AG04449 (cell line): ENCODE measurements at regions of chr17 and their contacts with region 1.

Region 1: DNA sequence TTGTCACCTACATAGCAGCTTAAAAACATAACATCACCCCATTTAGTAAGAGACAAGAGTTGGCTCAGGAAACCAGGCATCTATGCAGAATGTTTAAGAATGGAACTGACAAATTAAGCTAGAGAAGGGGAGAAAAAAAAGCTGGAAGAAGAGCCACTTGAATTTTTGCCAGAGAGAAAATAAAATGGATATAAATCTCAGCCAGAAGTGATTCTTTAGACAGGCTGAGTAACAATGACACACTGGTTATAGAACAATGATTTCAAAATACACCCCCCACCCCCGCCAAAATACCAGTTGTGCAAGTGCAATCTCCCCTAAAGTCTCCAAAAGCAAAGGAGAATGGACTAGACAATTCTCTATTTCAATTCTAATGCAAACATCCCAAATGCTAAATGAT is 22.4 kb downstream of the LSM12 start:
- DNase-seq: no peak
- H3K4me3 ChIP-seq: no peak overlapping the region
- CTCF ChIP-seq: no peak

Region 2: DNA sequence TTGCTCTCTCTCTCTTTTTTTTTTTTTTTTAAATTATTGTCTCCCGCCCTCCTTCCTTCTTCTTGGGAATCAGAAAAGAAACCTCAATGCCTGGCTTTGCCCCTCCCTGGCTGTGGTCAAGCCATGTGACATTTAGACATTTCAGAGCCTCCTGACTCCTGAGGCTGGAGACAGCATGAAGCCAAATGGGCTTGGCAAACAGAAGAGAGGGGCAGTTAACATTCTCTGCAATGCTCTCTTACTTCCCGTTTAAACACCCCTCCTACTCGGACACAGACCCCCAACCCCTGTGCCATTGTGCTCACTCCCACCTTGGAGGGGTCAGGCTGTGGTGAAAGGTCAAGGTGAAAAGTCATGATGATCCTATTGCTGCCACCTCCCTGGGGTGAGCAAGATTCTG is 367.6 kb before region 1 on chr17:
- CTCF ChIA-PET with region 1: no interaction called
- POLR2A ChIA-PET with region 1: no interaction called
- DNase-seq: no peak
- H3K4me3 ChIP-seq: no peak overlapping the region
- CTCF ChIP-seq: no peak

Region 3: DNA sequence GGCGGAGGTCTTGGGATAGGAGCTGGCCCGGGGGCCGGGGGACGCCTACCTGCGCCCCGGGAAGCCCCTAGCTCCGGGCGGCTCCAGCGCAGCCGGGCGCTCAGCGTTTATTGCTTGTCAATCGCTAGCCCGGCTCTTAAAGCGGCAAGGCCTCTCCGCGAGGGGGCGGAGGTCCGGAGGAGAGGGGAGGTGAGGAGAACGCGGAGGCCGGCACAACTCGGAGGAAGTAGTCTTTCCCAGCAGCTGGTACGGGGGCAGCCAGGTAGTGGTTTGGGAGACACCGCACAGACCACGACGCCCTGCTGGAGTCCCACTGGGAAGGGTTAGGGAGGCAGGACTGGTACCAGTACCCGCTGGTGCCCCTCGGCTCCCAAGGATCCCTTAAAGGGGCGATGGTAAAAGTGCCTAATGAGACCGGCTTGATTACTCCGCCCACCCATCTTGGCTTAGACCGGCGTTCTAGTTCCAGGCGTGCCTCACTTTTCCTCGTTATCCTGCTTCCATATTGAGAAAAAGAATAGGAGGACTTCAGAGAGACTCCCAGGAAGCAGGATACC is 136.6 kb before region 1 on chr17 and contains the start of gene MPP2:
- CTCF ChIA-PET with region 1: interaction called, 26 read pairs
- POLR2A ChIA-PET with region 1: no interaction called
- DNase-seq: no peak
- H3K4me3 ChIP-seq: peak within 1 kb of the TSS; percentile 74
- CTCF ChIP-seq: peak; percentile 32

Region 4: GRCh38 chr17:44006598-44007345 is 37.3 kb before region 1 on chr17:
- CTCF ChIA-PET with region 1: interaction called, 14 read pairs
- POLR2A ChIA-PET with region 1: no interaction called
- DNase-seq: peak; percentile 71
- H3K4me3 ChIP-seq: peak overlapping the region; percentile 84
- CTCF ChIP-seq: peak; percentile 82

Region 5: GRCh38 chr17:44061446-44061845 is 17.4 kb after region 1 on chr17:
- CTCF ChIA-PET with region 1: interaction called, 31 read pairs
- POLR2A ChIA-PET with region 1: interaction called, 3 read pairs
- DNase-seq: no peak
- H3K4me3 ChIP-seq: no peak overlapping the region
- CTCF ChIP-seq: no peak

Region 6: GRCh38 chr17:44095642-44096496 is 51.8 kb after region 1 on chr17:
- CTCF ChIA-PET with region 1: no interaction called
- POLR2A ChIA-PET with region 1: no interaction called
- DNase-seq: no peak
- H3K4me3 ChIP-seq: peak overlapping the region; percentile 51
- CTCF ChIP-seq: peak; percentile 38

Region 7: GRCh38 chr17:44110823-44111633 is 67.0 kb after region 1 on chr17:
- CTCF ChIA-PET with region 1: interaction called, 48 read pairs
- POLR2A ChIA-PET with region 1: no interaction called
- DNase-seq: peak; percentile 63
- H3K4me3 ChIP-seq: peak overlapping the region; percentile 67
- CTCF ChIP-seq: peak; percentile 6

Region 8: GRCh38 chr17:44293509-44294226 is 249.6 kb after region 1 on chr17:
- CTCF ChIA-PET with region 1: no interaction called
- POLR2A ChIA-PET with region 1: no interaction called
- DNase-seq: no peak
- H3K4me3 ChIP-seq: no peak overlapping the region
- CTCF ChIP-seq: no peak

Region 9: DNA sequence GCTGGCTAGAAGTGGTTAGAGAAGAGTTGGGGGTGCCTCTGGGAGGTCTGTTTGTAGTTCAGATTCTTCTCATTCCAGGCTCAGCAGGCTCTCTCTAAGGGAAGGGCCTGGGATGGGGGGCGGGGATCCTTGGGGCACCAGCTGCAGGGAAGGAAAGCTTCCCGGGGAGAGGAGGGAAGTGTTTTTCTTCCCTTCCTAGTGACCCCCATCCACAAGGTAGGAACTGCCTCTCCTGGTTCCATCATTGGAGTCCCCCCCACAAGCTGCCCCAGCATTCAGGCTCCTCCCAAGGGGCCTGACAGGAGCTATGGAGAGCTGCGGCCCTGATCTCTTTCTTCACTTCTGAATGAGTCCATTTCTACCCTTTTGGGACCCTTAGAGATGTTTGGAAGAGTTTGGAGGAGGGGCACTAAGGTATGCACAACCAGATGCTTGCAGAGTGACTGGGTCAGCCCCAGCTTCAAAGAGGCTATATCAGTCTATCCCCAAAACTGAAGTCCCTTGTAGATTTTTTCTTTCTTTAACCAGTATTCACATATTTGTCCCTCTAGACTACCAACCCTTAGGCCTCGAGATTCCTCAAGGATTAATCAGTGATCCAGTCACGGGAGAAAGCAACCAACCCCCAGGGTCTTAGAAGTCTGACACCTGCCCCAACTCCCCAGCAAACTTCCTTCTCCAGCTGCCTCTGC is 499.3 kb after region 1 on chr17:
- CTCF ChIA-PET with region 1: no interaction called
- POLR2A ChIA-PET with region 1: no interaction called
- DNase-seq: peak; percentile 86
- H3K4me3 ChIP-seq: peak overlapping the region; percentile 35
- CTCF ChIP-seq: no peak